Endothelial cell of umbilical vein (primary cell): ENCODE measurements at regions of chr2 and their contacts with region 1.

Region 1: GRCh38 chr2:36561237-36561944 is 36.6 kb downstream of the FEZ2 start:
- DNase-seq: peak; percentile 98
- H3K4me3 ChIP-seq: peak overlapping the region in 2 of 3 experiments; percentile 40 to 63
- H3K27ac ChIP-seq: peak overlapping the region; percentile 98
- H3K4me1 ChIP-seq: peaks cover 95% of the 10 kb centered on the region
- H3K27me3 ChIP-seq: no peaks in the 10 kb centered on the region
- CTCF ChIP-seq: no peak
- POLR2A ChIP-seq: no peak

Region 2: GRCh38 chr2:36376319-36376765 is 185.0 kb before region 1 on chr2:
- CTCF ChIA-PET with region 1: no interaction called
- POLR2A ChIA-PET with region 1: interaction called, 4 read pairs
- dilution Hi-C with region 1: no loop called
- intact Hi-C with region 1: loop called (anchors 5 kb)
- DNase-seq: peak; percentile 65
- H3K4me3 ChIP-seq: no peak overlapping the region
- H3K27ac ChIP-seq: peak overlapping the region; percentile 44
- H3K4me1 ChIP-seq: peaks cover 98% of the 10 kb centered on the region
- H3K27me3 ChIP-seq: no peaks in the 10 kb centered on the region
- CTCF ChIP-seq: no peak
- POLR2A ChIP-seq: no peak

Region 3: DNA sequence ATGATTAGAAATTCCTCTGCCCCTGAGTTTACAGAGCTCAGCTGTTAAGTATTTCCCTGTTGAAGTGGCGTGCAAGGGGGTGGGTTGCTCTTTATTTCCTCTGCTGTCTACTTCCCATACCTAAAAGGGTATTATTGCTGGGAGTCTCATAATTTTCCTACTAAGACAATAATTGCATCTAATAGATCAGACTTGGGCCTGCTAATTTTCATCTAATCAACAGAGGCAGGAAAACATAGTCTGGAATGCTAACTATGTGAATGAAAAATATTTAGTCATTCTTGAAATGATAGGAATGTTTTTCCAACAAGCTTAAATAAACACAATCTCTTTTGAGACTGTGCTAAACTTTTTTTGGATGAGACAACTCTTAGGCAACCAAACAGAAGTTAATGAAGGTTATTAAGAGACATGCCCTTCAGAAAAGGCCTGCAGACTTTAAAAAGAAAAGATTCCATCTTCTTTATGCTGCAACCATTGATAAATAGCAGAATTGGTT is 74.8 kb before region 1 on chr2:
- CTCF ChIA-PET with region 1: no interaction called
- POLR2A ChIA-PET with region 1: interaction called, 3 read pairs
- dilution Hi-C with region 1: no loop called
- intact Hi-C with region 1: loop called (anchors 1 kb)
- DNase-seq: peak; percentile 90
- H3K4me3 ChIP-seq: no peak overlapping the region
- H3K27ac ChIP-seq: peak overlapping the region; percentile 93
- H3K4me1 ChIP-seq: peaks cover 93% of the 10 kb centered on the region
- H3K27me3 ChIP-seq: no peaks in the 10 kb centered on the region
- CTCF ChIP-seq: no peak
- POLR2A ChIP-seq: peak; percentile 43

Region 4: DNA sequence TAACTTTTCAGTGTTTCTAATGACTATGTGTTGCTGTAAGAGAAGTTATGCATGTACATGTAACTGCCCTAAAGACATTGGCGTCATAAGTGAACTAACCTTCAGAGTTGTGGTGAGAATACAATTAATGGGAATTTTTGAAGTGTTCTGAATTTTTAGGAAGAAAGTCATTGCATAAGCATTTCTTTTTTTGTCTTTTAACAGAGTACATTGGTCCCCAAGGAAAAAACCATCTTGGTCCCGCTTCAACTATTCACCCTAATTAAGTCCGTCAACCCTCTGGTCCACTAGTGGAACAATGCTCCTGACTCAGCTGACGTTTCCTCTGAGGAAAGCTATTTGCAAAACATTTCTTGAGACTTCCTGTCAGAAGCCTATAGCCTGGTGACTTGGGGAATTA is 94.1 kb after region 1 on chr2:
- CTCF ChIA-PET with region 1: interaction called, 3 read pairs
- POLR2A ChIA-PET with region 1: interaction called, 4 read pairs
- dilution Hi-C with region 1: no loop called
- intact Hi-C with region 1: loop called (anchors 1 kb)
- DNase-seq: peak; percentile 89
- H3K4me3 ChIP-seq: no peak overlapping the region
- H3K27ac ChIP-seq: peak overlapping the region; percentile 66
- H3K4me1 ChIP-seq: peaks cover 24% of the 10 kb centered on the region
- H3K27me3 ChIP-seq: no peaks in the 10 kb centered on the region
- CTCF ChIP-seq: no peak
- POLR2A ChIP-seq: no peak

Region 5: DNA sequence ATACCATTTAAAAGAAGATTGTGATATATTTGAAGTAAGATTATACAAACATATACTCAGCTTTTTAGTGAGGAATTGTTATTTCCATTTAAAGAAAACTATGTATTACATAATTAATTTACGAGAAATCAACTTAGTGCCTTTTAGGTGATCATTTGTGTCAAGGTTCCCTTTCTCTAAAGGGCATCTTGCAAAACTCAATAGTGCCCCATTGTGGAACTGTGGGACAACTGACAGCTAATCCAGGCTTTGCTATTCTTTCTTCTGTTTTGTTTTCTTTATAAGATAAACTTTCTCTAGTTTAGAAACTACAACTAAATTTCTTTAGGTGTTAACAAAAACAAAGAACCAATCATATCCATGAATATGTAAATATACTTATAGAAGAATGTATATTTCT is 110.8 kb after region 1 on chr2:
- CTCF ChIA-PET with region 1: interaction called, 12 read pairs
- POLR2A ChIA-PET with region 1: no interaction called
- dilution Hi-C with region 1: no loop called
- intact Hi-C with region 1: no loop called
- DNase-seq: peak; percentile 60
- H3K4me3 ChIP-seq: no peak overlapping the region
- H3K27ac ChIP-seq: no peak overlapping the region
- H3K4me1 ChIP-seq: peaks cover 14% of the 10 kb centered on the region
- H3K27me3 ChIP-seq: no peaks in the 10 kb centered on the region
- CTCF ChIP-seq: peak; percentile 58
- POLR2A ChIP-seq: no peak

Region 6: DNA sequence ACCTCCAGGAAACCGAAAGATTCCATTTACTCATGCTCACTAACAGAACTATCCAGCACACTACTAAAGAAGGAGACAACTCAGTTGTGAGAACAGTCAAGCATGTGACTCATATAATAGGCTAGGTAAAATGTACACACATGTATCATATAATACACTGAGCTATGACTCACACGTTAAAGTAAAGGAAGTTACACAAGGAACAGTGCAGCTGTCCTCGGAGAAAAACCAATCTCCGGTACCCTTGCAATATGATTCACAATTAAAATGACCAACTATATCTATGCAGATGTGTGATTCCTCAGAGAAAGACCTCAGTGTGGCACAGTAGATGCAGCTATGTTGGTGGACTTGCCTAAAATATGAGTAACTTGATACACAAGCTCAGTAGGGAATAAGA is 328.4 kb after region 1 on chr2:
- CTCF ChIA-PET with region 1: no interaction called
- POLR2A ChIA-PET with region 1: no interaction called
- dilution Hi-C with region 1: no loop called
- intact Hi-C with region 1: no loop called
- DNase-seq: peak; percentile 95
- H3K4me3 ChIP-seq: no peak overlapping the region
- H3K27ac ChIP-seq: peak overlapping the region; percentile 61
- H3K4me1 ChIP-seq: peaks cover 5% of the 10 kb centered on the region
- H3K27me3 ChIP-seq: no peaks in the 10 kb centered on the region
- CTCF ChIP-seq: no peak
- POLR2A ChIP-seq: no peak